Calu3 (cell line): ENCODE measurements at regions of chr5 and their contacts with region 1.

Region 1: GRCh38 chr5:83564069-83564749 is 92.7 kb downstream of the VCAN start:
- DNase-seq: no peak
- H3K4me3 Mint-ChIP-seq: peak overlapping the region; percentile 33
- H3K27ac Mint-ChIP-seq: peak overlapping the region; percentile 84
- H3K4me1 Mint-ChIP-seq: peaks cover 70% of the 10 kb centered on the region
- H3K27me3 Mint-ChIP-seq: no peaks in the 10 kb centered on the region
- CTCF ChIP-seq: peak; percentile 44

Region 2: GRCh38 chr5:82165740-82166530 is 1398.3 kb before region 1 on chr5:
- CTCF ChIA-PET with region 1: no interaction called
- intact Hi-C with region 1: no loop called
- DNase-seq: peak; percentile 61
- H3K4me3 Mint-ChIP-seq: no peak overlapping the region
- H3K27ac Mint-ChIP-seq: peak overlapping the region; percentile 70
- H3K4me1 Mint-ChIP-seq: peaks cover 49% of the 10 kb centered on the region
- H3K27me3 Mint-ChIP-seq: no peaks in the 10 kb centered on the region
- CTCF ChIP-seq: peak; percentile 68

Region 3: DNA sequence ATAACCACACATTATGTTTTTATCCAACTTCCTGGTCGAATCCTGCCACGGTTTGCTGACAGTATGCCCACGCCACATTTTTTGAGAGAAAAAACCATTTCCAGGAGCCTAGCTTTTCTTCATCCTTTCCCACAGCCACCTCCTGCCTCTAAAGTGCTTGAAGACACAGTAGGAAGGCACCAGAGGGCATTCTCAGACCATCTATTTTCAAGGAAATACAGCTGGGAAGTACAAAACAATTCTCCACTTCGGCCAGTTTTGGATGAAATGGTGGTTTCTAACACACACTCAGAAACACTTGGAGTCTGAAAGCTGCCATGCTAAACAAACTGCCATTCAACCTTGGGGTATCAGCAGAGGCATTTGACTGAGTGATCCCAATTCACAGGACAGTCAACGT is 1199.7 kb before region 1 on chr5:
- CTCF ChIA-PET with region 1: interaction called, 6 read pairs
- intact Hi-C with region 1: loop called (anchors 2 kb)
- DNase-seq: peak; percentile 53
- H3K4me3 Mint-ChIP-seq: no peak overlapping the region
- H3K27ac Mint-ChIP-seq: peak overlapping the region; percentile 87
- H3K4me1 Mint-ChIP-seq: peaks cover 23% of the 10 kb centered on the region
- H3K27me3 Mint-ChIP-seq: no peaks in the 10 kb centered on the region
- CTCF ChIP-seq: peak; percentile 55

Region 4: GRCh38 chr5:82735160-82735789 is 828.9 kb before region 1 on chr5:
- CTCF ChIA-PET with region 1: no interaction called
- intact Hi-C with region 1: loop called (anchors 10 kb)
- DNase-seq: peak; percentile 10
- H3K4me3 Mint-ChIP-seq: no peak overlapping the region
- H3K27ac Mint-ChIP-seq: peak overlapping the region; percentile 65
- H3K4me1 Mint-ChIP-seq: peaks cover 47% of the 10 kb centered on the region
- H3K27me3 Mint-ChIP-seq: no peaks in the 10 kb centered on the region
- CTCF ChIP-seq: no peak

Region 5: DNA sequence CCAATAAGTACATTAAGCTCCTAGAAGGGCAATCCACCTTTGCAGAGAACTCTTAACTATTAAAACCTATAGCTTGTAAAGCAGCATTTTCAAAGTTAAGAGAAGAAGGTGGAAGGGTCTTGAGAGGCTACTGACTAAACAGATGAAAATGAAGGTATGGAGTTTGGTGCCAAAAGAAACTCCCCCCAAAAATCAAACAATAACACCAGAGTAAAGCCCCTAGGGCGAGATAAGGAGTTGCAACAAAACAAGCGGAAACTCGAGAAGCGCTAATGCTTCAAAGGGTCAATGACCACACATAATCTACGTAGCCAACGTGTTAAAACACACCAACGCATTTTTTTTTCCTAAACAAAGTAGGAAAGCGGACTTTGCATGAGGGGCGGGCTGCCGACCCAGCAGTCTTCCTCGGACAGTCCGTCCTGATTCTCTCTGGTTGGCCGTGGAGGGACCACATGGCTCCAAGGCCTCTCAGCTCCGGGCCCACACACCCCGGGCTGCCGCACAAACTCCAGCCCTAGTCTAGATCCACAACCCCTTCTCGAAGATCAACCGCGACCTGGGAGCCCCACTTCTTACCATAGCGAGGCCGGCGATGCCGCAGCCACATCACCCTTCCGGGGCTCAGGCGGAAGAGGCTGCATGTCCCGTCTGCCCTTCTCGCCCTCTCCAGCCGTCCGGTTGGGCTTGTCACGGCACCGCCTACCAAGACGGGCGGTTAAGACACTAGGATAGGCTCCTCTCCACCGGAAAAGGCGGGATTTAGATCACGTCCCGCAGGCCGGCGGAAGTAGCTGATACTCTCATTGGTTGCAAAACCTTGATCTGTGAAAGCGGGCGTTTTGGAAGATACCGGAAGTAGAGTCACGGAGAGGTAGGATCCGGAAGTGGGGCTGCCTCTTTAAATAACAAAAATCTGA is 487.2 kb before region 1 on chr5 and contains the starts of genes TMEM167A and XRCC4:
- CTCF ChIA-PET with region 1: no interaction called
- intact Hi-C with region 1: loop called (anchors 5 kb)
- DNase-seq: peak; percentile 96
- H3K4me3 Mint-ChIP-seq: peak within 1 kb of the TSS; percentile 96
- H3K27ac Mint-ChIP-seq: peak within 1 kb of the TSS; percentile 98
- H3K4me1 Mint-ChIP-seq: peaks cover 39% of the 10 kb centered on the region
- H3K27me3 Mint-ChIP-seq: no peaks in the 10 kb centered on the region
- CTCF ChIP-seq: no peak
- total RNA-seq, gene TMEM167A: 161 and 165 TPM in 2 replicates
- total RNA-seq, gene XRCC4: 25.5 and 34.2 TPM in 2 replicates

Region 6: DNA sequence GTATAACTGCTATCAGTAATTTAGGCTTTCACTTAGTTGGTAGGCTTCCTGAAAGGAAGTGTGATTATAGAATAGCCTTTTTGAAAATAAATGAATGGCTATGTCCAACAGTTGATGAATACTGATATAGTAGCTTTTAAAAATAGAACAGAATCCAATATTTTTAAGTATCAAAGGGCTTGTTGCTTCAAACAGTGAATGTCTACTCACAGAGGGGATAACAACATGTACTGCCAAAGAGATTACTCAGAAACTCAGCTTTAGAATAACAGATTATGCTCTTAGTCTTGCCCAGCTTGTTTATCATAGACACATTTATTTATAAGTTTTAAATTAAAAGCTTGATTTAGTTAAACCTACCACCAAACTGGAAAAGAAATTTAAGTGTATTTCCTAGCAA is 354.2 kb before region 1 on chr5:
- CTCF ChIA-PET with region 1: no interaction called
- intact Hi-C with region 1: no loop called
- DNase-seq: no peak
- H3K4me3 Mint-ChIP-seq: no peak overlapping the region
- H3K27ac Mint-ChIP-seq: no peak overlapping the region
- H3K4me1 Mint-ChIP-seq: peaks cover 10% of the 10 kb centered on the region
- H3K27me3 Mint-ChIP-seq: no peaks in the 10 kb centered on the region
- CTCF ChIP-seq: no peak

Region 7: GRCh38 chr5:83430130-83431010 is 133.8 kb before region 1 on chr5:
- CTCF ChIA-PET with region 1: no interaction called
- intact Hi-C with region 1: loop called (anchors 1 kb)
- DNase-seq: peak; percentile 81
- H3K4me3 Mint-ChIP-seq: no peak overlapping the region
- H3K27ac Mint-ChIP-seq: no peak overlapping the region
- H3K4me1 Mint-ChIP-seq: no peaks in the 10 kb centered on the region
- H3K27me3 Mint-ChIP-seq: no peaks in the 10 kb centered on the region
- CTCF ChIP-seq: peak; percentile 89

Region 8: DNA sequence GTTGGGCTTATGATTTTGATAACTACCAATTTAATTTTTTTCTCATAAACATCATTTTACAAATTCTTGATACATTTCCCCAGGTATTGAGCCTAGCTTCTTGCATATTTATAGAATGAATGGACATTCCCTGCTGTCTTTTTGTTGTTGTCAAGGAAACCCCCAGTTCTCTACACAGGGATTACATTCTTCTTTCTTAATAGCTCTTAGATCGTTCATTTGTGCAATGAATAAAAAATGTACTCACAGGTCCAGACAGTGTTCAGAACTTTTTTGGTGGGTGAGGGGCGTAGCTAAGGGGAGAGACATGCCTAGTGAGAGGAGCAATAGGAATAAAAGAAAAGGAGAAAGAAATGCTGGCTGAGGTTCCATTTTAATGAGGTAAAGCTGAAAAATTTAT is 34.0 kb before region 1 on chr5:
- CTCF ChIA-PET with region 1: no interaction called
- intact Hi-C with region 1: no loop called
- DNase-seq: no peak
- H3K4me3 Mint-ChIP-seq: no peak overlapping the region
- H3K27ac Mint-ChIP-seq: no peak overlapping the region
- H3K4me1 Mint-ChIP-seq: no peaks in the 10 kb centered on the region
- H3K27me3 Mint-ChIP-seq: no peaks in the 10 kb centered on the region
- CTCF ChIP-seq: no peak

Region 9: DNA sequence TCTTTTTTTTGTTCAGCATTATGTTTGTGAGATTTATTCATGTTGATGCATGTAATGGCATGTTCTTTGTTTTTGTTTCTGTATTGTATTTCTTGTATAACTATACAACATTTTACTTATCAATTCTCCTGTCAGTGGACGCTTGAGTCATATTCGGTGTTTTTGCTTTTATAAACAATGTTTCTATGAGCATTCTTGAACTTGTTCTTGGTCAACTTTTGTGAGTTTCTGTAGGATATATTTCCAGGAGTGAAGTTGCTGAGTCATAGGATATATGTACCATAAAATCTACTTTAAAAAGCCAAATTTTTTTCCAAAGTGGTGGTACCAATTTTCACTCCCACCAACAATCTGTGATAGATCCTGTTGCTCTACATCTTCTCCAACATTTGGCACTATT is 12.1 kb after region 1 on chr5:
- CTCF ChIA-PET with region 1: no interaction called
- intact Hi-C with region 1: loop called (anchors 1 kb)
- DNase-seq: no peak
- H3K4me3 Mint-ChIP-seq: no peak overlapping the region
- H3K27ac Mint-ChIP-seq: peak overlapping the region; percentile 77
- H3K4me1 Mint-ChIP-seq: peaks cover 41% of the 10 kb centered on the region
- H3K27me3 Mint-ChIP-seq: no peaks in the 10 kb centered on the region
- CTCF ChIP-seq: no peak